Naive thymus-derived CD8-positive, alpha-beta T cell (primary cell): ENCODE measurements at regions of chr3 and their contacts with region 1.

Region 1: DNA sequence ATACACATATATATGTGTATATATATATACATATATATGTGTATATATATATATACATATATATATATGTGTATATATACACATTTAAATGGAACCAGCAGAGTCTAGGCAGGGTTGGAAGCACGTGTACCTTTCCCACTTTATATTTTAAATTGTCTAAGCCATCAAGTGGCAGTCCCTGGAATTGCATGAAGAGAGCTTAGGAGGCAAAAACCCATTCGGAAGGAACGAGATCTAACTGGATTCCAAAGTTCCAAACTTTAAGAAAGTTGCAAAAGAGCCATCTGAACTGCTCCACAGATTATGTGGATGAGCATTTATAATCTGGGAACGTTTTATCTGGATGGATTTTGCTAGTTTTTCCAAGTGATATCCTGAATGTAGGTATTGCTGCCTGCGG is 186.5 kb downstream of the FOXP1 start:
- DNase-seq: no peak
- ATAC-seq: no peak
- H3K4me3 Mint-ChIP-seq: peak overlapping the region in 7 of 10 donors; percentile 54 to 87 (median 77)
- H3K27ac Mint-ChIP-seq: peak overlapping the region; percentile 91 to 99 (median 97)
- H3K4me1 Mint-ChIP-seq: peaks cover 42 to 88% (median 77%) of the 10 kb centered on the region in 4 donors
- H3K27me3 Mint-ChIP-seq: no peaks in the 10 kb centered on the region

Region 2: GRCh38 chr3:71356265-71356664 is 40.8 kb before region 1 on chr3:
- POLR2A ChIA-PET with region 1: interaction called, 10 read pairs
- DNase-seq: no peak
- ATAC-seq: peak in 1 of 2 donors; percentile 37
- H3K4me3 Mint-ChIP-seq: peak overlapping the region in 1 of 10 donors; percentile 19
- H3K27ac Mint-ChIP-seq: peak overlapping the region in 8 of 10 donors; percentile 34 to 89 (median 80)
- H3K4me1 Mint-ChIP-seq: peaks cover 38 to 81% (median 77%) of the 10 kb centered on the region in 4 donors
- H3K27me3 Mint-ChIP-seq: no peaks in the 10 kb centered on the region